ENCODE measurements at regions of chr4 and their contacts with region 1.

Region 1: DNA sequence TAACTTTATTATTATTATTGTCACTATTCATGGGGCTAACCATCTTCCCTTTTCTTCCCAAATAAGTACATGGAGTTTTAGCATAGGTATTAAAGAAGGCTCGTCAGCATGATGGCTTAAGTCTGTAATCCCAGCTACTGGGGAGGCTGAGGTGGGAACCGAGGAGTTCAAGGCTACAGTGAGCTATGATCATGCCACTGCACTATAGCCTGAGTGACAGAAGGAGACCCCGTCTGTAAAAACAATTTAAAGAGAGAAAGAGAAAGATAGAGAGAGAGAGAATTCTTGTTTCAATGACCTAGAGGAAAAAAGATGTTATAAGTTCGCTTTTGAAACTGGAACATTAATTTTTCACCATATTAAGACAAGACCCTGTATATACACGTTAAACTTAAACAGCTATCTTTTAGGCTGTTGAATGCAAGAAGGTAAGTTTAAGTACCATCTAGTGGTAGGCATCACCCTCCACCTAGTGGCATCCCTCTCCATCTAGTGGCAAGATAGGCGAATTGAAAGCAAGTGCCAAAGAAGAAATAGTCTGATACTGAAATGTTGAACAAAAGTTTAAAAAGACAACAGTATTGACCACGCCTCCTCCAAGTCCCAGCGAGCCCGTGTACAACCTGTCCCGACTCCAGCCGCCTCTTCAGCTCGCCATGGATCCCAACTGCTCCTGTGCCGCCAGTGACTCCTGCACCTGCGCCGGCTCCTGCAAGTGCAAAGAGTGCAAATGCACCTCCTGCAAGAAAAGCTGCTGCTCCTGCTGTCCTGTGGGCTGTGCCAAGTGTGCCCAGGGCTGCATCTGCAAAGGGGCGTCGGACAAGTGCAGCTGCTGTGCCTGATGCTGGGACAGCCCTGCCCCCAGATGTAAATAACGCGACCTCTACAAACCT is 26.0 kb upstream of the YTHDC1 start:
- DNase-seq: peak; percentile 81
- H3K4me3 ChIP-seq: peak overlapping the region in 2 of 8 donors; percentile 8 to 63
- H3K27ac ChIP-seq: no peak overlapping the region
- H3K4me1 ChIP-seq: peaks cover 0 to 16% (median 9%) of the 10 kb centered on the region in 6 donors
- H3K27me3 ChIP-seq: peaks cover 0 to 20% (median 4%) of the 10 kb centered on the region in 7 donors
- CTCF ChIP-seq: peak; percentile 54 to 80 (median 77)
- POLR2A ChIP-seq: no peak

Region 2: DNA sequence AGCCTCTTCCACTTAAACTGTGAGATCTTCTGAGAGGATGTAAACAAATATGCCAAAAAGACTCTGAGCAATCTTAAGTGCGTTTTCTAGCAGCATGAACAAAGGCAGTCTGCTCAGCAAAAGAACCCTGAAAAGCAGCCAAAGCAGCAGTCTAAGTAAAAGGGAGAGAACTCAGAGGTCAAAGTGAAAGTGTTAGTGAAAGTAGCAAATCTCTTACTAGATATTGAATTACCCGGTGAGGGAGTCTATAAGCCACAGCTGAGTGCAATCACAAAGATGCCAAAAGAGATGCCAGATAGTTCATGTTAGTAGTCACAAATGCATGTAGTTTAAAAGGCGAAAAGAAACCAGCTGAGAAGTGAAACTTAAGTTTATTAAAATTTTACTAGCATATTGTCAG is 613.8 kb before region 1 on chr4:
- intact Hi-C with region 1: no loop called
- DNase-seq: no peak
- H3K4me3 ChIP-seq: no peak overlapping the region
- H3K27ac ChIP-seq: no peak overlapping the region
- H3K4me1 ChIP-seq: peaks cover 0 to 5% (median 0%) of the 10 kb centered on the region in 6 donors
- H3K27me3 ChIP-seq: no peaks in the 10 kb centered on the region
- CTCF ChIP-seq: no peak
- POLR2A ChIP-seq: no peak

Region 3: GRCh38 chr4:68271851-68272756 is 103.8 kb before region 1 on chr4:
- intact Hi-C with region 1: loop called (anchors 2 kb)
- DNase-seq: no peak
- H3K4me3 ChIP-seq: peak overlapping the region in 2 of 8 donors; percentile 20 to 31
- H3K27ac ChIP-seq: no peak overlapping the region
- H3K4me1 ChIP-seq: peaks cover 0 to 5% (median 0%) of the 10 kb centered on the region in 6 donors
- H3K27me3 ChIP-seq: peaks cover 0 to 8% (median 0%) of the 10 kb centered on the region in 7 donors
- CTCF ChIP-seq: peak; percentile 33 to 78 (median 69)
- POLR2A ChIP-seq: no peak